ENCODE measurements at regions of chr2 and their contacts with region 1.

Region 1: GRCh38 chr2:232327105-232328041 is 51.2 kb upstream of the ALPP start:
- DNase-seq: peak; percentile 77
- H3K4me3 Mint-ChIP-seq: no peak overlapping the region
- H3K27ac Mint-ChIP-seq: no peak overlapping the region
- H3K4me1 Mint-ChIP-seq: peaks cover 5% of the 10 kb centered on the region
- H3K27me3 Mint-ChIP-seq: no peaks in the 10 kb centered on the region

Region 2: DNA sequence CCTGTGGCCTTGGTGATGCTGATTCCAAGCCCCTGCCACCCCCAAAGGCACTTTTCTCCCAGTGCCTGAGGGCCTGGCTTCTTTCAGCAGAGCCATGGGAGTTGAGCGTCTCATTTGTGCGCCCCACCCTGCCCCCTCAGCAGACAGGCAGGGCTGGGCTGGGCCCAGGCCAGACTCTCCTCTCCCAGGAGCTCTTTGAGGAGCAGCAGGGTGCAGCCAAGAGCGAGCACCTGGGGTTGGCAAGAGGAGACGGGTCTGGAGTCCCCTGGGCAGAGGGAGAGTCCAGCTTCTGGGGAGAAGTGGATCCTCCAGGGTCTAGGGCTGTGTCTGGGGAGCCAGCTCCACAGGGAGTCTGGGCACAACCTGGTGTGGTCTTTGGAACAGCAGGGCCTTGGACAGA is 422.3 kb before region 1 on chr2:
- intact Hi-C with region 1: loop called (anchors 2 kb)
- DNase-seq: no peak
- H3K4me3 Mint-ChIP-seq: no peak overlapping the region
- H3K27ac Mint-ChIP-seq: no peak overlapping the region
- H3K4me1 Mint-ChIP-seq: peaks cover 7% of the 10 kb centered on the region
- H3K27me3 Mint-ChIP-seq: peaks cover 4% of the 10 kb centered on the region

Region 3: DNA sequence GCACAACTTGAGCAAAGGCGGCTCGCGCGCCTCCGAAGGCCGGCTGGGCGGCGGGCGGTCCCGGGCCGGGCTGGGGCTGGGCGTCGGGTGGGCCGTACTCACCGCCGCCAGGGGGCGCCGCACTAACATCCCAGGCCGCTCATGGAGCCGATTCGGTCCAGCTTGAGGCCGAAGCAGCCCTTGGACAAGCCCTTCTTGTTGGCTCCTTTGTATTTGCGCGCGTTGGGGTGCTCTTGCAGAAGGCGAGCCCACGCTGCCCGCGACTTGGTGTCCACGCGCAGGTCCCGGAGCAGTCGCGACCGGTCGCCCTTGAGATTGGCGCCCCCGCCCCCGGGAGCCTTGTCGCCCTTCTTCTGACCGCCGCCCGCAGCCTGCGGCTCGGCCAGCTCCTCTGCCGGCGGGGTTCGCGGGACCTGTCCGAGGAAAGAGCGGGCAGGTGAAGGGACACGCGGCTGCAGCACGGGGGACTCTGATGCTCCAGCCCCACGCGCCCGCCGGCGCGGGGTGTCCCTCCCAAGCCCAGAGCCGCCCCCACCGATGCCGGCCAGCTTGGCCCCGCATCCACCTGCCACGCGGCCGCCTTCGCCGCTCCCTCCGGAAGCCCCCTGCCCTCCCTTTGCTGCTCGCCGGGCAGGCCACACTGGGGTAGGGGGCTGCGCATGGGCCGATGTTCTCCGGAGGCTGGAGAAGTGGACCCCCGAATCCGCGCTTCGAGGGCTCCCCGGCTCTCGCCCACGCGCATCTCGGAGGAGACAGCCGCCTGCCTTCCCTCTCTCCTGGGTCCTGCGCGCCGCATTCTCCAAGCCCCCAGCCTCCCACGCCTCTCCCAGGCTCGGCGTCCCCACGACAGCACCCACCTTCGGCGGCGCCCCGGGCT is 401.8 kb before region 1 on chr2:
- intact Hi-C with region 1: loop called (anchors 1 kb)
- DNase-seq: peak; percentile 54
- H3K4me3 Mint-ChIP-seq: peak overlapping the region; percentile 26
- H3K27ac Mint-ChIP-seq: no peak overlapping the region
- H3K4me1 Mint-ChIP-seq: no peaks in the 10 kb centered on the region
- H3K27me3 Mint-ChIP-seq: peaks cover 52% of the 10 kb centered on the region

Region 4: GRCh38 chr2:232142049-232142448 is 185.3 kb before region 1 on chr2:
- intact Hi-C with region 1: loop called (anchors 5 kb)
- DNase-seq: no peak
- H3K4me3 Mint-ChIP-seq: no peak overlapping the region
- H3K27ac Mint-ChIP-seq: no peak overlapping the region
- H3K4me1 Mint-ChIP-seq: peaks cover 10% of the 10 kb centered on the region
- H3K27me3 Mint-ChIP-seq: peaks cover 2% of the 10 kb centered on the region

Region 5: DNA sequence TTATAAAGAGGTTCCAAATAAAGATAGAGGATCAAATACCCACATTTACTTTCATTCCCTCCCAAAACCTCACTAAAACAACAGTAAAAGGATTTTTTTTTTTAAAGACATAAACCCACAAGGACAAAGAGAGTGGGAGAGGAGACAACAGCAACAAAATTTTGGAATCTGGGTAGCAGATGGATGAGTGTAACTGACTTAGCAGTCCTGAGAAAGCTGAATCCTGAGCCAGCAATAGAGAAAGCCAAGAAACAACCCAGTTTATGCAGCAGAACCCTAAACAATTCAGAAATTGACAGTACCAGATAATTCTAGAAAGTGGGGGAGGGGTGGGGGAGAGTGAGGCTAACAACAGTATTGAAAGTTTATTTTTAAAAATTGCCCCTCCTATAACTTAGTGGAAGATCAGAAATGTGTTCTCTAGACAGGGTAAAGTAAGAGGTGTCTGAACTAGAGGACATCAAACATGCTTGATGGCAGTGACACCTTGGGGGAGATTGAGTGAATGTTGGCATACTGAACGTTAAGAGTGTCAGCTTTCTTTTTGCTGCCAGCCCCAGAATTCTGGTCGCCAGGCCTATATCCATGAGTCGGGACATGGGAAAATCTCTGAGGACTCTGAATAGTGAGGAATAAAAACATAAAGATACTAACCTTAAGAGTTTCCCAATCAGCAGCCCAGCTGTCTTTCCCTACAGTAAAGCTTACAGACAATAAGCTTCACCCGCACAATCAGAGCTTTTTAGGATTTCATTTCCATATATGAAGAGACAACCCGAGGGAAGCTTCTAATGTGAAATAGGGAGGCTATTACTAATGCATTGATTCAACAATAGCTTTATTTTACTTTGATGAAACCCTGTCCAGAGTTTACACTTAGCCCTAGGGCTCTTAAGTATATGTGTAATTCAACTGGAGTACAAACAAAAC is 76.9 kb before region 1 on chr2:
- intact Hi-C with region 1: no loop called
- DNase-seq: no peak
- H3K4me3 Mint-ChIP-seq: no peak overlapping the region
- H3K27ac Mint-ChIP-seq: no peak overlapping the region
- H3K4me1 Mint-ChIP-seq: no peaks in the 10 kb centered on the region
- H3K27me3 Mint-ChIP-seq: no peaks in the 10 kb centered on the region

Region 6: GRCh38 chr2:232292395-232293154 is 34.8 kb before region 1 on chr2:
- intact Hi-C with region 1: loop called (anchors 2 kb)
- DNase-seq: peak; percentile 42
- H3K4me3 Mint-ChIP-seq: no peak overlapping the region
- H3K27ac Mint-ChIP-seq: no peak overlapping the region
- H3K4me1 Mint-ChIP-seq: no peaks in the 10 kb centered on the region
- H3K27me3 Mint-ChIP-seq: no peaks in the 10 kb centered on the region

Region 7: GRCh38 chr2:232339121-232340081 is 12.0 kb after region 1 on chr2:
- intact Hi-C with region 1: no loop called
- DNase-seq: no peak
- H3K4me3 Mint-ChIP-seq: no peak overlapping the region
- H3K27ac Mint-ChIP-seq: no peak overlapping the region
- H3K4me1 Mint-ChIP-seq: no peaks in the 10 kb centered on the region
- H3K27me3 Mint-ChIP-seq: peaks cover 3% of the 10 kb centered on the region

Region 8: DNA sequence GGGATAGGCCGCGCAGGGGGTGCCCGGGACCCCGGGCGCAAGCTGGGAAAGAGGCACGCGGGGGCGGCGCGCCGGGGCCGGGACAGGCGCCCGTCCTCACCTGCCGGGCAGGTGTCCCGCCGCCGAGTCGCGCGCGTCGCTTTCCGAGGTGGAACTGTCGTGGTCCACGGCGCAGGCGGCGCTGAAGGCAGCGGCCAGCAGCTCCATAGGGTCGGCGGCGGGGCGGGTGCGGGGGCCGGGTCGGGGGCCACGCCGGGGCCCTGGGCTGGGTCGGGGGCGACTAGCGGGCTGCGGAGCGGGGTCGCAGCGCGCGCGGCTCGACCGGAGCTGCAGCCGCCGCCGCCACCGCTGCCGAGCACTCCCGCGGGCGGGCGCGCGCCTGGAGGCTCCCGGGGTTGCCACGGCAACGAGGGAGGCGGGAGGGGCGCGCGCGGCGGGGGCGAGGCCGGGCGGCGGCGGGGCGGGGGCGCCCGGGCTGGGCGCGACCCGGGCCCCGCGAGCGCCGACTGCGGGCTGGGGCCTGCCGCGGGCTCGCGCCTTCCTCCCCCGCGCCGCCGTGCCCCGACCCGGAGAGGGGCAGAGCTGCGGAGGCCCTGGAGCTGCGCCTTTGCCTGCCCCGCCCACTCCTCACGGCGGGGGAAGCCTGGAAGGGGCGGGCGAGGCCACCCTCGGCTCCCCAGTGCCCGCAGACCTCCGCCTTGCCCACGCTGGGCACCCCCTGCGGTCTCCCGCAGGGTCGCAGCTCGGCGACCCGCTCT is 600.6 kb after region 1 on chr2:
- intact Hi-C with region 1: no loop called
- DNase-seq: no peak
- H3K4me3 Mint-ChIP-seq: no peak overlapping the region
- H3K27ac Mint-ChIP-seq: no peak overlapping the region
- H3K4me1 Mint-ChIP-seq: peaks cover 8% of the 10 kb centered on the region
- H3K27me3 Mint-ChIP-seq: peaks cover 56% of the 10 kb centered on the region

Measured in activated T-helper 2 cell treated with anti-CD3 and anti-CD28 coated beads, Interferon-gamma antibody, Interleukin-2, Interleukin-4, amounts not matched to agents 10 μg/mL and 5 μg/mL and 100 μg/mL, durations not matched to agents 14 hours and 24 hours and 36 hours (primary cell).